AG04449 (cell line): ENCODE measurements at regions of chr17 and their contacts with region 1.

Region 1: DNA sequence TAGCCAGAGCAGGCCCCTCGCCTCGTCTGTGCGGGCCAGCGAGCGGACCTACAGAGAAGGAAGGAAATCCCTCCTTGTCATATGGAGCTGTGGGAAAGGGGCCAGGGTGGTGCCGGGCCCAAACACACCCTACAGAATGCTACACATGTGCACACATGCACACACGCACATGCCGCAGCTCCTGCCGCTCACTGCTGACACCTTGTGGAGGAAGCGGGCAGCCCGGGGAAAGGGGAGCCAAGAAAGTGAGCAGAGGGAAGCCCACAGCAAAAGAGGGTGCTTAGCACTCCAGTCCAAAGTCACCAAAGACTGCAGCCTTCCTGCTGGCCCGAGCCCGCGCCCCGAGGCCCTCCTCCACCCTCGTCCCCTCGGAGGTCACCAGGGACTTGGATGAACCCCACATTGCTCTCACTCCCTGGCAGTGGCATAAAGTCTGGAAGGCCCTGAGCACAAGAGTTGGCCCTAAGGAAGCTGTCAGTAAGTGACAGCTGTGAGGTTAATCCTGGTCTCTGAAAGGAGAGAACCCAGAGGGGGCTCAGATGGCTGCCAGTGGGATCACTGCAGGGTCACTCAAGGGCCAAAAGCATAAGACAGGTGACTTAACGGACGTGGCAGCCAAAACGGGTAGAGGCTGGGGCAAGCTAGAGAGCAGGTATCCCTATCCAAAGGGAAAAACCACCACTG is 68.2 kb downstream of the MYO18A start:
- DNase-seq: no peak
- H3K4me3 ChIP-seq: no peak overlapping the region
- CTCF ChIP-seq: peak; percentile 98

Region 2: GRCh38 chr17:28967221-28968140 is 144.5 kb before region 1 on chr17:
- CTCF ChIA-PET with region 1: interaction called, 1,065 read pairs
- POLR2A ChIA-PET with region 1: interaction called, 5 read pairs
- DNase-seq: no peak
- H3K4me3 ChIP-seq: no peak overlapping the region
- CTCF ChIP-seq: no peak

Region 3: DNA sequence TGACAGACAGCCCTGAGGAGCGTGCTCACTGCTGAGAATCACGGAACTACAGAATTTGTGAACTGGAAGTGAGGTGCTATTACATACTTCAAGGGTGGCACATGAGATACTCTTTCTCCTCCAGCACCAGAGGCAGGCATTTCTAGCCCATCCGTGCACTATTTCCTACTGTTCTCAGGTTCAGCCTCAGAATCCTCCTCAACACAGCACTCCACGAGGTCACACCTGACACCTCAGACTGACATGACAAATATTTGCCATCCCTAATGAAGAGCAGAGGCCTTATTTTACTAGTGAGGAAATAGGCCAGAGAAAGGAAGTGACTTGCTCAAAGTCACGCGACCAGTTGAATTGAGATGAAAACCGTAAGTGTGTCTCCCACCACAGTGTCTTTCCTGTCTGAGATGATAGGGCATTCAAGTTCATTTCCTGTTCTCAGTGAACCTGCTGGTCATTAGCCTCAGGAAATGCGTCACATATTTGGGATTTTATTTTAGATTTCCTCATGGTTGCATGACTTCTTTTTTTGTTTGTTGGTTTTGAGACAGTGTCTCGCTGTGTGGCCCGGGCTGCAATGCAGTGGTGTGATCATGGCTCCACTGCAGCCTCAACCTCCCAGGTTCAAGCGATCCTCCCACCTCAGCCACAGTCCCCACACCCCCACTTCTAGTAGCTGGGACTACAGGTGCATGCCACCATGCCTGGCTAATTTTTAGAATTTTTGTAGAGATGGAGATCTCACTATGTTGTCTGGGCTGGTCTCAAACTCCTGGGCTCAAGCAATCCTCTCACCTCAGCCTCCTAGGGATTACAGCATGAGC is 129.6 kb before region 1 on chr17:
- CTCF ChIA-PET with region 1: interaction called, 19 read pairs
- POLR2A ChIA-PET with region 1: no interaction called
- DNase-seq: no peak
- H3K4me3 ChIP-seq: no peak overlapping the region
- CTCF ChIP-seq: no peak

Region 4: GRCh38 chr17:29048440-29049368 is 63.3 kb before region 1 on chr17:
- CTCF ChIA-PET with region 1: interaction called, 13 read pairs
- POLR2A ChIA-PET with region 1: no interaction called
- DNase-seq: no peak
- H3K4me3 ChIP-seq: no peak overlapping the region
- CTCF ChIP-seq: no peak

Region 5: DNA sequence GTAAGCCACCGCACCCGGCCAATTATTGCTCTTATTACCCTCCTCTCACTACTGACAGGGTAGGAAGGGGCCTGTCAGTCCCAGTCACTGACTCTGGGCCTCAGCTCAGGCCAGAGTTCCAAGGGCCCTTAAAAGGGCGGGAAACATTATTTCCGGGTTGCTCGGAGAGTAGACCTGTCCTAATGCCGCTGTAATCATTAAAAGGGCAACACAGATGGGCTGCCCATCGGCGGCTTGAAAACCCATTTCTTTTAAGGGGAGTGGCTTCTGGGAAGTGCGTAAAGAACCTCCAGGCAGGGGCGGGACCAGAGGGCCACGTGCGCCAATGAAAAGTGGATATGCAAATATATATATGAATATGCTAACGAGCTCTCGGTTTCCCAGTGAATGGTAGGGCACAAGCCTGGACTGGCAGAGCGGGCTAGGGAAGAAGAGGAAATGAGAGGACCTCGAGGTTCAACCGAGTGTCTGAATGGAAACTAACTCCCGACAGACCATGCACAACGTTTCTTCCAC is 42.4 kb before region 1 on chr17:
- CTCF ChIA-PET with region 1: interaction called, 19 read pairs
- POLR2A ChIA-PET with region 1: no interaction called
- DNase-seq: no peak
- H3K4me3 ChIP-seq: no peak overlapping the region
- CTCF ChIP-seq: no peak

Region 6: GRCh38 chr17:29124117-29124924 is 12.4 kb after region 1 on chr17:
- CTCF ChIA-PET with region 1: interaction called, 411 read pairs
- POLR2A ChIA-PET with region 1: no interaction called
- DNase-seq: no peak
- H3K4me3 ChIP-seq: no peak overlapping the region
- CTCF ChIP-seq: peak; percentile 72

Region 7: DNA sequence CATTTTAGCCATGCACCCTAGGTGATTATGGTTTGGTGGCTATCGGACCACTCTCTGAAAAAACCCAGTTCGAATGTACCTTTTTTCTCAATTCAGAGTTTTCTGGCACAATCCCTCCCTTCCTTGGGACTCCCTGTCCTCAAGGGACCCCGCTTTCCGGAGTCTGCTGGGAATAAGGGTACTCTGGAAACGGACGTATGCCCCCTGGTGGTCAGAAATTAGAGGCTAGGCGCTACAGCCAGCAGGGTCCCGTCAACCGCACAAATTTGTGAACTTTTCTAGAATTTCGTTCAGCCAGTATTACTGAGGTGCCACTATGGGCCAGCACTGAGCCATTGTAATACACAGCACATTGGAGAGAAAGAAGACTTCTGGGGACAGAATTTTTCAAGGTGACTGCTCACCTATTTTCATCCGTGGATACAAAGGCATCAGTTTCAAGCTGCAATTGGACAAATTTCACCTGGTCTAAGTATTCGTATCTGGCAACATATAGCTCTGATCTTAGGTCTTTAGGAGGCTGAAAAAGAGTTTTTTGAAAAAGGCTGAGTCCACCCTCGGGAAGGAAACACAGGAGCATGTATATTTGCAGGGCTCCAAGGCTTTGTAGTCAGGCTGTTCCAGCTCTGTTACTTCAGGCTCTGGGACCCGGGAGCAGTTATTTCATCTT is 107.6 kb after region 1 on chr17:
- CTCF ChIA-PET with region 1: interaction called, 49 read pairs
- POLR2A ChIA-PET with region 1: no interaction called
- DNase-seq: no peak
- H3K4me3 ChIP-seq: no peak overlapping the region
- CTCF ChIP-seq: peak; percentile 87